ENCODE measurements at regions of chr19 and their contacts with region 1.

Region 1: GRCh38 chr19:43463381-43464136 is 1.8 kb downstream of the LYPD3 start:
- DNase-seq: peak; percentile 95
- H3K4me3 ChIP-seq: peak overlapping the region; percentile 70
- H3K27ac ChIP-seq: peak overlapping the region; percentile 19
- H3K4me1 ChIP-seq: peaks cover 9% of the 10 kb centered on the region
- CTCF ChIP-seq: no peak

Region 2: GRCh38 chr19:43503501-43504425 is 40.2 kb after region 1 on chr19:
- CTCF ChIA-PET with region 1: interaction called, 10 read pairs
- POLR2A ChIA-PET with region 1: interaction called, 6 read pairs
- intact Hi-C with region 1: loop called (anchors 2 kb)
- DNase-seq: peak; percentile 97
- H3K4me3 ChIP-seq: peak overlapping the region; percentile 77
- H3K27ac ChIP-seq: peak overlapping the region; percentile 26
- H3K4me1 ChIP-seq: peaks cover 16% of the 10 kb centered on the region
- CTCF ChIP-seq: peak; percentile 72

Measured in OCI-LY7 (cell line).